ENCODE measurements at regions of chr1 and their contacts with region 1.

Region 1: DNA sequence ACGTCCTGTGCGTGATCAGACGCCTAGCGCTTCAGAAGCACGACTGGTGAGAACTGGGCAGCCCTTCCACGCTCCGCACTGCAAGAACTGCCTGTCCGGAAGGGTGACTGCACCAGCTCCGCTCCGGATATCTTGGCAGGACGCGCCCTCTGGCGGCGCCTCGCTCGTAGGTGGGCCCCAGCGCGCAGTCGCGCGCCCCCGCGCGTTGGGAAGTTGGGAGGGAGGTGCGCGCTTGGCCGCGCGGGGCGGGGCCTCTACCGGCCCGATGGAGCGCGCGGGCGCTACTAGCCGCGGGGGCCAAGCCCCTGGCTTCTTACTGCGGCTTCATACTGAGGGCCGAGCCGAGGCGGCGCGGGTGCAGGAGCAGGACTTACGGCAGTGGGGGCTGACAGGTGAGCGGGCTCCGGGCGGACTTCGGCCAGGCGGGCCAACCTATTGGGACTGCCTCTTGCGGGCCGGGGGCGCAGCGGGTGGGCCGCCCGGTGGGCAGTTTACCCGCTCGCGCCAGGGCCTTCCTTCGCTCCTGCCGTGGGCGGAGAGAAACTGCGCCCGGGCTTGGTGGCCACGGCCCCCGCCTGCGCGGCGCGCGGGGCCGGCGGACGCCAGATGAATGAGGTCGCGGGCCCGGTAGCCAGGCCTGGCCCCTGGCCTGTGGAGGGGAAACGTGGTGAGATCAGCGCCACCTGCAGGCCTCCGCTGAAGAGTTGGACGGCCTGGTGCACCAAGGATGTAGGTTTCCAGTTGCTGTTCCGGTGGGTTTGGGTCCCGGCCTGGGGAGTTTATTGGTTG is at the start of gene CHD1L:
- DNase-seq: peak; percentile 96
- H3K4me3 ChIP-seq: peak within 1 kb of the TSS; percentile 98
- H3K27ac ChIP-seq: peak within 1 kb of the TSS; percentile 77
- H3K4me1 ChIP-seq: peaks cover 38% of the 10 kb centered on the region
- CTCF ChIP-seq: peak; percentile 82
- total RNA-seq, gene CHD1L: 42.2 and 52.7 TPM in 2 replicates

Region 2: DNA sequence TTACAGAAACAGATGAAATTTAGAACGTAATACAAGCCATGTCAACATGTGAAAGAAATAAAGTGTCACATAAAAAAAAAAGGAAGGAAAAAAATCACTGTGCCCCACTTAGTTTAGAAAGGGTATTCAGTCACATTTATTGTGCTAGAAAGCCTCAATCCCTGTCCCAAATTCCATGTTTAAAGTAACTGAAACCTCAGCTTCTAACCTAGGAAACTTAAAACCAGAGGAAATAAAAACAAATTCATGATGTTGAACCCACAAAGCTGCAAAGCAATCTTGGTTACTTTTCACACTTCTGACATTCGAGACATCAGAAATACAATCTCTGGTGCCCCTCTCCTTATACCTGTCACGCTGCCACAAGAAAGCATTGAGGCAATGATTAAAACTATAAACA is 202.7 kb before region 1 on chr1:
- CTCF ChIA-PET with region 1: no interaction called
- POLR2A ChIA-PET with region 1: no interaction called
- intact Hi-C with region 1: loop called (anchors 5 kb)
- DNase-seq: no peak
- H3K4me3 ChIP-seq: peak overlapping the region; percentile 87
- H3K27ac ChIP-seq: peak overlapping the region; percentile 99
- H3K4me1 ChIP-seq: peaks cover 66% of the 10 kb centered on the region
- CTCF ChIP-seq: no peak; the same call in 1 of the 2 replicates

Region 3: DNA sequence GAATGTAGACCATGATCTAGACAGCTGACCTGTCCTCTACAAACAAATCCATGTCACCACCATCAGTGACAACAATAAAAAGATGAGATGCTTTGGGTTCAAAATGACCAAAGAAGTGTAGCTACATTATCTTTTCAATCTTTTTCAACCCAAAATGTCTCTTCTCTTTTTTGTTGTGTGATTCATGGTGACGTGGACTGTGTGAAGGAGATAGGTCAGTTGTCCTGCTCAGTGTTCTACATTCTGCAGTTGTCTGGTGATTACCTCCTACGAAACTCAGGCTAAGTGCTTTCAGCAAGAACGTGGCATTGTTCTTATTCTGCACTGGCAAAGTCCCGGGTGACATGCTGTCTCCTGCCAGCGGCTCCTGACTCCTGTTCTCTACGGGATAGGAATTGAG is 143.4 kb before region 1 on chr1:
- CTCF ChIA-PET with region 1: no interaction called
- POLR2A ChIA-PET with region 1: no interaction called
- intact Hi-C with region 1: loop called (anchors 5 kb)
- DNase-seq: no peak
- H3K4me3 ChIP-seq: no peak overlapping the region
- H3K27ac ChIP-seq: no peak overlapping the region
- H3K4me1 ChIP-seq: peaks cover 6% of the 10 kb centered on the region
- CTCF ChIP-seq: no peak

Region 4: DNA sequence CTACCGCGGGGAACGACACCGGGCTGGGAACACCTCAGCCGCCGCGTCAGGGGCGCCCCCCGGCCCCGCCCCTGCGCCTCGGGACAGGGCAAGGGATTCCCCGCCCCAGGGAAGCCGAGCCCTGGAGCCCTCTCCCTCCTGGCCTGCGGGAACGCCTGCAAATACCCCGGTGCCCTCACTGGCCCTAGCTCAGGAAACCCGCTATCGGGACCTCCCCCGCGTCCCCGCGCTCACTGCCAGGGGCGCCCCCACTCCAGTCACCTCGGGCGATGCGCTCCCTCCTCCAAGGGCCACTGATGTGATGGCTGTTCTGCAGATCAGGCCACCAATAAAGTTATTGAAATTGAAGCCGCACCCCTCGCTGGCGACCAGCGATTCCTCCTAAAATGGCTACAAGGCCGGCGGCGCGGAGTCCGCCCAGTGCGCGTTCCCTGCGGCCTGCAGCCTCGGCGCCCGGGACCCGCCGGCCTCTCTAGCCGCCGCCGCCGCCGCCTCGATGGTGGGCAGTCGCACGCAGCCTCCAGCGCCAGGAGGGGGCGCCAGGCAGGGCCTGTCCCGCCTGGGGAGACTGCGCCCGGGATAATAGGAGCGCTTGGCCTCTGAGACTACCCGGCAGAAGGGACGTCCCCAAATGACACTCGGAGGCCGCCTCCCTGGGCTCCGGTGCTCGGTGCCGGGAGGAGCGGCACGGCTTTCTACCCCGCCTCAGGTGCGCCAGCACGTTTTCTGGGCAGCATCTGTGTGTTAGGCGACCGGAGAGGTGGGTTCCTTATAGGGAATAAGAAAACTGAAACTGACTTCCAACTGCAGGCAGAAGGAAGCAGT is 70.3 kb before region 1 on chr1 and contains the start of gene PRKAB2:
- CTCF ChIA-PET with region 1: interaction called, 5 read pairs
- POLR2A ChIA-PET with region 1: interaction called, 6 read pairs
- intact Hi-C with region 1: loop called (anchors 1 kb)
- DNase-seq: peak; percentile 97
- H3K4me3 ChIP-seq: peak within 1 kb of the TSS; percentile 87
- H3K27ac ChIP-seq: peak within 1 kb of the TSS; percentile 65
- H3K4me1 ChIP-seq: peaks cover 30% of the 10 kb centered on the region
- CTCF ChIP-seq: peak; percentile 84
- total RNA-seq, gene PRKAB2: 11.6 and 12.0 TPM in 2 replicates

Region 5: DNA sequence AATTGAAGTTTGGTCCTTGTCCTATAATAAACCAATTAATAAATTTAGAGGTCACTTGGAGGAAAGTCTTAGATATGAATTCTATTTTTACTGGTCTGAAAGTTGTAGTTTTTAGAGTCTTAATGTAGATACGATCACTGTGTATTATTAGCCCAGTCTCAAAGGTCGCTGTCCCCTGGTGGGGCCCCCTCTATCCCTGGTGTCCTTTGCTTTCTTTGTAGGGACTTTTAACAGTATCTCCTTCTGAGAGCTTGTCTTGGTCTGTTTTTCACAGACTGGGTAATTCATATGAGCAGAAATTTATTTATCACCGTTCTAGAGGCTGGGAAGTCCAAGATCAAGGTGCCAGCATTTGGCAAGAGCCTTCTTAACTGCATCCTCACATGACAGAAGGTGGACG is 18.3 kb after region 1 on chr1:
- CTCF ChIA-PET with region 1: no interaction called
- POLR2A ChIA-PET with region 1: no interaction called
- intact Hi-C with region 1: no loop called
- DNase-seq: no peak
- H3K4me3 ChIP-seq: no peak overlapping the region
- H3K27ac ChIP-seq: no peak overlapping the region
- H3K4me1 ChIP-seq: no peaks in the 10 kb centered on the region
- CTCF ChIP-seq: no peak

Region 6: GRCh38 chr1:147409886-147410285 is 167.3 kb after region 1 on chr1:
- CTCF ChIA-PET with region 1: no interaction called
- POLR2A ChIA-PET with region 1: no interaction called
- intact Hi-C with region 1: no loop called
- DNase-seq: no peak
- H3K4me3 ChIP-seq: no peak overlapping the region
- H3K27ac ChIP-seq: no peak overlapping the region
- H3K4me1 ChIP-seq: no peaks in the 10 kb centered on the region
- CTCF ChIP-seq: no peak

Region 7: DNA sequence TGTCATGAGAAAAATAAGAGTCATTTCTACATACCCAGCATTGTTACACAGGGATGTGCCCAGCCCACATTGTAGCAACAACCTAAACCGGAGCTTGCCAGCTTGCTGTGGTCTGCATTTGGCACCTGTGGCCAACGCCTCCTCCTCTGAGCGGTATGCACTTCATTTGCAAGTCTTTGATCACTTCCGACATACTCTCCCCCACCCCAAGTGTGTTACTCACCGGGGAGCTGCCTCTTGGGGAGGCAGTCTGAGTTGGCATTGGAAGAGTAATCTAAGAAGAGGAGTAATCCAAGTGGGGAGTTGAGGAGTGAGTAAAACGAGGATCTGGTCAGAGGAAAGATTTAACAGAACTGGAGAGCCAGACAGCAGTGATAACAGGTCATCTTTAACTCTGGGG is 302.5 kb after region 1 on chr1:
- CTCF ChIA-PET with region 1: no interaction called
- POLR2A ChIA-PET with region 1: no interaction called
- intact Hi-C with region 1: no loop called
- DNase-seq: peak; percentile 90
- H3K4me3 ChIP-seq: peak overlapping the region; percentile 39
- H3K27ac ChIP-seq: peak overlapping the region; percentile 40
- H3K4me1 ChIP-seq: peaks cover 53% of the 10 kb centered on the region
- CTCF ChIP-seq: no peak